Common myeloid progenitor, CD34-positive (primary cell): ENCODE measurements at regions of chr2 and their contacts with region 1.

Region 1: GRCh38 chr2:199940373-199940772 is 14.9 kb downstream of the TYW5 start:
- DNase-seq: peak; percentile 34 to 69 (median 64)
- H3K4me3 ChIP-seq: no peak overlapping the region
- H3K27ac ChIP-seq: no peak overlapping the region
- H3K4me1 ChIP-seq: no peaks in the 10 kb centered on the region
- H3K27me3 ChIP-seq: no peaks in the 10 kb centered on the region

Region 2: GRCh38 chr2:199772035-199772976 is 168.1 kb before region 1 on chr2:
- CTCF ChIA-PET with region 1: no interaction called
- POLR2A ChIA-PET with region 1: no interaction called
- DNase-seq: peak in 2 of 3 donors; percentile 40 to 62
- H3K4me3 ChIP-seq: no peak overlapping the region
- H3K27ac ChIP-seq: no peak overlapping the region
- H3K4me1 ChIP-seq: no peaks in the 10 kb centered on the region
- H3K27me3 ChIP-seq: no peaks in the 10 kb centered on the region

Region 3: DNA sequence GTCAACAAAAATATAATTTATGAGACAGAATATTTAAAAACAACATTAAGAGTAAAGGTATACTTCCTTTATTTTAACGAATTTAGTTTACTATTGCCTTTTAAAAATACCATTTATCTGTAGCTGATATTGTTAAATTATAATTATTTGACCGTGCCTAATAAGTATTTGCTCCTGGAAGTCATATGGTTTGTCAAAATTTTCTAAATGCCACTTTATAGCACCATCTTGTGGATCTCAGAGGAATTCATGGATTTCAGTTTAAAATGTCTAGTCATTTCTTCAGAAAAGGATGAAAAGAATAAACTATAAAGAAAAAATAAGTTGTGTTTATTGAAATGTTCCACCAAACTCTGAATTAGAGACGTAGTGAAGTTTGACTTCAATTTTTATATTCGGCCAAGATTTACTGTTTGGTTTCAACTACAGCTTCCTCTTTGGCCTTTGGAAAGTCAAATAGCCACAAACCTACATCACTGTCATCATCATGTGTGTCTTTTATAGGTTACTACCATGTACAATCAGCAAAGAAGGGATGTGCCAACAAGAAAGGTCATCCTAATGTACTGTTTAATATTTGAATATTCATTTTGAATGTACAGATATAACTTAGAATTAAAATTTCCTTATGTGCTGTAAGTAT is 79.1 kb before region 1 on chr2:
- CTCF ChIA-PET with region 1: interaction called, 13 read pairs
- POLR2A ChIA-PET with region 1: no interaction called
- DNase-seq: peak; percentile 29 to 57 (median 52)
- H3K4me3 ChIP-seq: no peak overlapping the region
- H3K27ac ChIP-seq: no peak overlapping the region
- H3K4me1 ChIP-seq: peaks cover 0 to 3% (median 0%) of the 10 kb centered on the region in 4 experiments
- H3K27me3 ChIP-seq: no peaks in the 10 kb centered on the region

Region 4: GRCh38 chr2:200065477-200065876 is 125.1 kb after region 1 on chr2:
- CTCF ChIA-PET with region 1: no interaction called
- POLR2A ChIA-PET with region 1: no interaction called
- DNase-seq: no peak
- H3K4me3 ChIP-seq: no peak overlapping the region
- H3K27ac ChIP-seq: no peak overlapping the region
- H3K4me1 ChIP-seq: no peaks in the 10 kb centered on the region
- H3K27me3 ChIP-seq: no peaks in the 10 kb centered on the region

Region 5: DNA sequence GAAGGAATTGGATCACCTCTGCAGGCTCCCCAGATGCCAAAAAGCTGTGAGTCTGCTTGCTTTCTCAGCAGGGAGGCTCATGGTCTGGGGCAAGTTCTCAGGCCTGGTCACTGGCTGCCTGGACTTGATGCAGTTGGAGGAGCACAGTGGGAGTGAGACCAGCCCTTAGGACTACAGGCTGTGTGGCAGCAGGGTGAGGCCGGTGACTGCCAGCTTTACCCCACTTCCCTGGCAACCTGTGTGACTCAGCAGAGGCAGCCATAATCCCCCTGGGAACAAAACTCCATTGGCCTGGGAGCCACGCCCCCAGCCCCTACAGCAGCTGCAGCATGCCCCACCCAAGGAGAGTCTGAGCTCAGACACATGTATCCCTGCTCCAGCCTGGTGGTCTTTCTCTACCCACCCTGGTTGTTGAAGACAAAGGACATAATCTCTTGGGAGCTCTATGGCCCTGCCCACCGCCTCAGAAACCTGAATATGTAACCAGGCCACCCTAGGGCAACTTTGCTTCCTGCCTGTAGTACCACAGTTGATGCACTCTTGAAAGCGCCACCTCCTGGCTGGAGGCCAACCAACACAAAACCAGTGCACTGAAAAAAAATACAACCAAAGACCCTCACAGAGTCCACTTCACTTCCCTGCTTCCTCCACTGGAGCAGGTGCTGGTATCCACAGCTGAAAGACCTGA is 259.3 kb after region 1 on chr2:
- CTCF ChIA-PET with region 1: no interaction called
- POLR2A ChIA-PET with region 1: no interaction called
- DNase-seq: peak in 1 of 3 donors; percentile 3
- H3K4me3 ChIP-seq: no peak overlapping the region
- H3K27ac ChIP-seq: no peak overlapping the region
- H3K4me1 ChIP-seq: peaks cover 0 to 17% (median 5%) of the 10 kb centered on the region in 4 experiments
- H3K27me3 ChIP-seq: no peaks in the 10 kb centered on the region